ENCODE measurements at regions of chr22 and their contacts with region 1.

Region 1: GRCh38 chr22:29625090-29625825 is 21.8 kb downstream of the NF2 start:
- H3K4me3 ChIP-seq: no peak overlapping the region
- H3K27ac ChIP-seq: no peak overlapping the region
- H3K4me1 ChIP-seq: peaks cover 44% of the 10 kb centered on the region
- CTCF ChIP-seq: no peak

Region 2: DNA sequence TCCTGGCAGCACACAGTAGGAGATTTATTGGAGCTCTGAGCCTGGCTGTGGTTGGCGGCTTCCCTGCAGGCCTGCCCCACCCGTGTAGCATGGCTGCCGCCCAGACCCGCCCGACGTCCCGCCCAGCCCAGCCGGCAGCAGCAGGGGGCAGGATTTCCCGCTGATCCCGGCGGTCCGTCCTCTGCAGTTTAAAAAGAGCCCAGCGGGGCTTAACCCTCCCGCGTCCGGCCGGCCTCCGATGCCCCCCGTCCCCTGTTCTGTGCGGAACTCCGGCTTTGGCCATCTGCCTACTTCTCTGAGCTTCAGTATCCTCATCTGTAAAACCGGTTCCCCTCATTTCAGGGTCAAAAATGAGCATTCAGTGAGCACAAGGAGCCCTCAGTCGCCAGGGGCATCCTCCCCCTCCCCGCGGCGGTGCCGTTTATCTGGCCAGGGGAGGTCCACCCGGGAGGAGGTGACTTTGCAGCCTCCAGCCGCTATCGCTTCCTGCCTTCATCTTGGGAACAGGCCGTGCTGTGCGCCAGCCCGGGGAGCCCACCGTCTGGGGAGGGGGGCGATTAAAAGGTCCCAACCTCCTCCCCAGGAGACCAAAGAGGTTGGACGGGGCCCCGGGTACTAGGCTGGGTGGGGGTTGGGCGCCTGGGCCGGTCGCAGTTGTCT is 319.0 kb before region 1 on chr22 and contains the start of gene GAS2L1:
- CTCF ChIA-PET with region 1: no interaction called
- POLR2A ChIA-PET with region 1: no interaction called
- H3K4me3 ChIP-seq: peak within 1 kb of the TSS; percentile 50
- H3K27ac ChIP-seq: peak within 1 kb of the TSS; percentile 94
- H3K4me1 ChIP-seq: peaks cover 7% of the 10 kb centered on the region; the same call in 1 of the 2 replicates
- CTCF ChIP-seq: peak; percentile 85

Region 3: DNA sequence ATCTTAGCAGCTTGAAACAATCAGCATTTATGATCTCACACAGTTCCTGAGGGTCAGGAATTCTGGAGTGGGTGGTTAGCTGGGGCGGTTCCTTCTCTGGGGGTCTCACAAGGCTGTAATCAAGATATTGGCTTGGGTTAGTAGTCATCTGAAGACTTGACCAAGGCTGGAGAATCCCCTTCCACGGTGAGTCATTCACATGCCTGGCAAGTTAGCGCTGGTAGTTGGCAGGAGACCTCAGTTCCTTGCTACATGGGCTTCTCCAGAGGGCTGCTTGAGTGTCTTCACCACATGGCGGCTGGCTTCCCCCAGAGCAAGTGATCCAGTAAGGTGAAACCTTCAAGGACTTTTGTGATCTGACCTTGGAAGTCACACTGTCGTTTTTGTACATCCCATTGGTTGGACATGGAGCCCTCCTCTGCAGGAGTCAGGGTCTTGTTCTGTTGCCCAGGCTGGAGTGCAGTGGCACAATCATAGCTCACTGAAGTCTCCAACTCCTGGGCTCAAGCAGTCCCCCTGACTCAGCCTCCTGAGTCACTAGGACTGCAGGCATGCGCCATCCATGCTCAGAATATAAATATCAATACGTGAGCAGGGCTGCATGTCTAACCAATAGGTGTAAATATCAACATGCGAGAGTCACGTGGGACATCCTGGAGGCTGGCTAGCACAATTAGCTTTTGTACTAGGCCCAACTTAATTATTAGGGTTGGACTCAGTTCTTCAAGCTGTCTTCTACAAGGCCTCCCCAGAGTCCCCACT is 37.1 kb before region 1 on chr22:
- CTCF ChIA-PET with region 1: interaction called, 16 read pairs
- POLR2A ChIA-PET with region 1: no interaction called
- H3K4me3 ChIP-seq: no peak overlapping the region
- H3K27ac ChIP-seq: no peak overlapping the region
- H3K4me1 ChIP-seq: no peaks in the 10 kb centered on the region
- CTCF ChIP-seq: no peak

Region 4: GRCh38 chr22:29603358-29604075 is 21.7 kb before region 1 on chr22 and contains the start of gene NF2:
- CTCF ChIA-PET with region 1: interaction called, 23 read pairs
- POLR2A ChIA-PET with region 1: interaction called, 6 read pairs
- H3K4me3 ChIP-seq: peak within 1 kb of the TSS; percentile 90
- H3K27ac ChIP-seq: peak within 1 kb of the TSS; percentile 78
- H3K4me1 ChIP-seq: no peaks in the 10 kb centered on the region
- CTCF ChIP-seq: peak; percentile 81

Region 5: DNA sequence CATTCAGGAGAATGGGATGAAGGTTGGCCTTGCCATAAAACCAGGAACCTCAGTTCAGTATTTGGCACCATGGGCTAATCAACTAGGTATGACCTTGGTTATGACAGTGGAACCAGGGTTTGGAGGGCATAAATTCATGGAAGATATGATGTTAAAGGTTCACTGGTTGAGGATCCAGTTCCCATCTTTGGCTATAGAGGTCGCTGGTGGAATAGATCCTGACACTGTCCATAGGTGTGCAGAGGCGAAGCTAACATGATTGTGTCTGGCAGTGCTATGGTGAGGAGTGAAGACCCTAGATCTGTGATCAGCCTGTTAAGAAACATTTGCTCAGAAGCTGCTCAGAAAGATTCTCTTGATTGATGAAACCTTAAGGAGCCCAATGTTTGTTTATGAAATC is 16.1 kb before region 1 on chr22:
- CTCF ChIA-PET with region 1: interaction called, 23 read pairs
- POLR2A ChIA-PET with region 1: interaction called, 6 read pairs
- H3K4me3 ChIP-seq: no peak overlapping the region
- H3K27ac ChIP-seq: no peak overlapping the region
- H3K4me1 ChIP-seq: no peaks in the 10 kb centered on the region
- CTCF ChIP-seq: no peak

Region 6: GRCh38 chr22:29635734-29636357 is 10.6 kb after region 1 on chr22:
- CTCF ChIA-PET with region 1: interaction called, 51 read pairs
- POLR2A ChIA-PET with region 1: interaction called, 3 read pairs
- H3K4me3 ChIP-seq: no peak overlapping the region
- H3K27ac ChIP-seq: no peak overlapping the region
- H3K4me1 ChIP-seq: no peaks in the 10 kb centered on the region; the same call in 1 of the 2 replicates
- CTCF ChIP-seq: peak; percentile 70; the same call in 1 of the 2 replicates

Region 7: DNA sequence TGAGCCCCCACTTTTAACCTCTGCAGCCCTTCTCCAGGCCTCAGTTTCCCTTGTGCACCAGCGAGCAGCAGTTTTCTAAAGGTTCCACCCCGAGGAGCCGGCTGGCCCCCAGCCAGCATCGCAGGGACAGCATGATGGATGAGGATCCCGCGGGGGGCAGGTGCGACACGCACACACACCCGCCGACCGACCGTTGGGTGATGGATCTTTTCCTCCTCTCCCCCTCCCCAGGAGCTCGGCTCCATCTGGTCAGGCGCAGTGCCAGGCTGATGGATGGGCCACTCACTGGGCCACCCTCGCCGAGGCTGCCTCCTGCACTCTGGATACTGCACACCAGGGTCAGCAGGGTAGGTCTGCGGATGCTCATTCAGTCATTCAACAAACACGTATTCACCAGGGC is 81.7 kb after region 1 on chr22:
- CTCF ChIA-PET with region 1: no interaction called
- POLR2A ChIA-PET with region 1: no interaction called
- H3K4me3 ChIP-seq: no peak overlapping the region
- H3K27ac ChIP-seq: no peak overlapping the region
- H3K4me1 ChIP-seq: peaks cover 12% of the 10 kb centered on the region
- CTCF ChIP-seq: no peak

Measured in HEK293 (cell line).